ENCODE measurements at regions of chr6 and their contacts with region 1.

Region 1: DNA sequence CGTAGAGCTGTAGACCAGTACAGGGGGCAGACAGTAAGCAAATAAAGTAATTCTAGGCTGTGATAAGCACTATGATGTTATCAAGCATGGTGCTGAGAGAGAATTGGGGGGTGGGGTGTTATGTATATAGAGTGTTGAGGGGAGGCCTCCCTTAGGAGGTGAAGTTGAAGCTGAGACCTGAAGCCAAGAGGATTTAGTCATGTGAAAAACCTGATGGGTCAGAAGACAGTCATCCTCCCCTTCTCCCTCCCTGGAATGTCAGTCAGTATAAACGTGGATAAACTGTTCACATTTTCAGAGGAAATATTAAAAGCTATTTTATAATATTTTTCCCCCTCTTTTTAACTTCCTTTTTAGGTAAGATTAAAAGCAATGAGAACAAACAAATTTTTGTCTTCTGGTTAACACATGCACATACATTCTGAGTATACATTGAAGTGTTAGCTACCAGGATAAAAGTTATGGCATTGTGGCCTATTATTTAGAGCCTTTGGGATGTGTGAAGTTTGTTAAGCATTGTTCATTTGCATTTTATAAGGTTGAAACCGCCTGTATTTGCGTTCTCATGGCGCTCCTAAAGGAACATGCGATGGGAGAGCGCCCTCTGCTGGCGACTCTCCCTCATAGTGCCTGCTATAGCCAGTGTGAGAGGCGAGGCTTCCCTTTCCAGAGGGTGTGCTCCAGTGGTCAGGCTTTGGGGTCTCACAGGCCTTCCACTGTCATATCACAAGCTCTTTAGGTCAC is 35.4 kb upstream of the MAPK13 start:
- DNase-seq: peak; percentile 85
- ATAC-seq: peak; percentile 93
- H3K4me3 Mint-ChIP-seq: no peak overlapping the region
- H3K27ac Mint-ChIP-seq: no peak overlapping the region
- H3K4me1 Mint-ChIP-seq: peaks cover 28% of the 10 kb centered on the region
- H3K27me3 Mint-ChIP-seq: no peaks in the 10 kb centered on the region

Region 2: GRCh38 chr6:36033935-36034334 is 61.0 kb before region 1 on chr6:
- CTCF ChIA-PET with region 1: interaction called, 174 read pairs
- POLR2A ChIA-PET with region 1: interaction called, 37 read pairs
- DNase-seq: peak; percentile 65
- ATAC-seq: peak; percentile 70
- H3K4me3 Mint-ChIP-seq: no peak overlapping the region
- H3K27ac Mint-ChIP-seq: no peak overlapping the region
- H3K4me1 Mint-ChIP-seq: peaks cover 59% of the 10 kb centered on the region
- H3K27me3 Mint-ChIP-seq: no peaks in the 10 kb centered on the region

Region 3: GRCh38 chr6:36052097-36052496 is 42.8 kb before region 1 on chr6:
- CTCF ChIA-PET with region 1: interaction called, 22 read pairs
- POLR2A ChIA-PET with region 1: no interaction called
- DNase-seq: no peak
- ATAC-seq: no peak
- H3K4me3 Mint-ChIP-seq: no peak overlapping the region
- H3K27ac Mint-ChIP-seq: no peak overlapping the region
- H3K4me1 Mint-ChIP-seq: peaks cover 2% of the 10 kb centered on the region
- H3K27me3 Mint-ChIP-seq: no peaks in the 10 kb centered on the region

Region 4: GRCh38 chr6:36073587-36073986 is 21.3 kb before region 1 on chr6:
- CTCF ChIA-PET with region 1: interaction called, 17 read pairs
- POLR2A ChIA-PET with region 1: no interaction called
- DNase-seq: no peak
- ATAC-seq: no peak
- H3K4me3 Mint-ChIP-seq: no peak overlapping the region
- H3K27ac Mint-ChIP-seq: no peak overlapping the region
- H3K4me1 Mint-ChIP-seq: no peaks in the 10 kb centered on the region
- H3K27me3 Mint-ChIP-seq: no peaks in the 10 kb centered on the region

Region 5: GRCh38 chr6:36083446-36083845 is 11.5 kb before region 1 on chr6:
- CTCF ChIA-PET with region 1: interaction called, 33 read pairs
- POLR2A ChIA-PET with region 1: no interaction called
- DNase-seq: no peak
- ATAC-seq: no peak
- H3K4me3 Mint-ChIP-seq: no peak overlapping the region
- H3K27ac Mint-ChIP-seq: no peak overlapping the region
- H3K4me1 Mint-ChIP-seq: no peaks in the 10 kb centered on the region
- H3K27me3 Mint-ChIP-seq: no peaks in the 10 kb centered on the region

Region 6: GRCh38 chr6:36123257-36124139 is 28.6 kb after region 1 on chr6:
- CTCF ChIA-PET with region 1: interaction called, 44 read pairs
- POLR2A ChIA-PET with region 1: interaction called, 15 read pairs
- DNase-seq: peak; percentile 95
- ATAC-seq: peak; percentile 80
- H3K4me3 Mint-ChIP-seq: no peak overlapping the region
- H3K27ac Mint-ChIP-seq: peak overlapping the region; percentile 98
- H3K4me1 Mint-ChIP-seq: peaks cover 91% of the 10 kb centered on the region
- H3K27me3 Mint-ChIP-seq: no peaks in the 10 kb centered on the region

Region 7: DNA sequence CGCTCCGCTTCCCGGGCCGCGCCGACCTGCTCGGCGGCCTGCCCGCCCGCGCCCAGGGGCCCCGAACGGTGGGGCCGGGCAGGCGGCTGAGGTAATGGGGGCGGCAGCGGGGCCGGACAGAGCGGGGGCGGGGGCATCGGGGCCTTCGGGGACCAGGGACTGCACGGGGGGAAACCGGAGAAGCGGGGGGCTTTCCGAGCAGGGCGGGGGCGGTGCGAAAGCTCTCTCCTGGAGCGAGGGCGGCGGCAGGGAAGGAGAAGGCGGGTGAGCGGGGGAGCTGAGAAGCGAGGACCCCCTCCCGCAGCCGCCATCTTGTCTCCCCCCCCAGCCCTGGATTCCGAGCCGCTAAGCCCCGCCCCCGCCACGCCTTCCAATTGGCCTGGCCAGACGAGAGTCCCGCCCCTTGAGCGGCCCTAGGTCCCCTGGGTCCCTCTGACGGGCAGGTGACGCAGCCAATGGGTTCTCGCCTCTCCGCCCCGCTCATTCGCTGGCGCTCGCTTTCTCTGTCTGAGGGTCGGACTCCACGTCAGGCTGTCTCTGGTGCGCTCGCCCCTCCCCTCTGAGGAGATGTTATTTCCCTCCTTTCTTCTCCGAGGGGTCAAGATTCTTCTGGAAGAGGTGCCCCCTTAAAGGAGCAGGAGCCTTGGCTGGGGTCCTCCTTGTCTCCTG is 102.1 kb after region 1 on chr6:
- CTCF ChIA-PET with region 1: interaction called, 11 read pairs
- POLR2A ChIA-PET with region 1: no interaction called
- DNase-seq: peak; percentile 99
- ATAC-seq: peak; percentile 96
- H3K4me3 Mint-ChIP-seq: peak overlapping the region; percentile 84
- H3K27ac Mint-ChIP-seq: peak overlapping the region; percentile 94
- H3K4me1 Mint-ChIP-seq: peaks cover 46% of the 10 kb centered on the region
- H3K27me3 Mint-ChIP-seq: peaks cover 2% of the 10 kb centered on the region

Measured in activated CD8-positive, alpha-beta T cell treated with anti-CD3 and anti-CD28 coated beads, Interleukin-2, amount 10 ng/mL, durations not matched to agents 7 days and 5 days (primary cell).